ENCODE measurements at regions of chr3 and their contacts with region 1.

Region 1: GRCh38 chr3:21017115-21017852 is 733.7 kb downstream of the ZNF385D start:
- DNase-seq: peak; percentile 85
- H3K4me3 ChIP-seq: no peak overlapping the region
- H3K27ac ChIP-seq: no peak overlapping the region
- H3K4me1 ChIP-seq: no peaks in the 10 kb centered on the region
- H3K27me3 ChIP-seq: no peaks in the 10 kb centered on the region
- CTCF ChIP-seq: peak; percentile 2 to 40

Region 2: DNA sequence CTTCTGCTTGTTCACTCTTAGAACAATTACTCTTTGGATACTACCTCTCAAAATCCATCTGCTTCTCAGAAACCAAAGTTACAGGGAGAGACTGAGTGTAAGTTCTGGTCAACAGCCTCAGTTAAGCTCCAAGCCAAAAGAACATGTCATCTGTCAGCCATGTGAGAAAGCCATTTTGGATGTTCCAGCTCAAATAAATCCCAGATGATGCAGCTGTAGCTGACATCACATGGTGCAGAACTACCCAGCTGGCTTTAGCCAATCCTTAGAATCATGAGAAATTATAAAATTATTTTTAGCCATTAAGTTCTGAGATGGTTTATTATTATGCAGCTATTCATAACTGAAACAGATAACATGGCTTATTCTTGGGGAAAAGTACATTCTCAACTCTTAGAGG is 37.7 kb after region 1 on chr3:
- CTCF ChIA-PET with region 1: no interaction called
- dilution Hi-C with region 1: no loop called
- in situ Hi-C with region 1: no loop called
- intact Hi-C with region 1: no loop called
- DNase-seq: no peak
- H3K4me3 ChIP-seq: no peak overlapping the region
- H3K27ac ChIP-seq: no peak overlapping the region
- H3K4me1 ChIP-seq: no peaks in the 10 kb centered on the region
- H3K27me3 ChIP-seq: no peaks in the 10 kb centered on the region
- CTCF ChIP-seq: no peak

Region 3: DNA sequence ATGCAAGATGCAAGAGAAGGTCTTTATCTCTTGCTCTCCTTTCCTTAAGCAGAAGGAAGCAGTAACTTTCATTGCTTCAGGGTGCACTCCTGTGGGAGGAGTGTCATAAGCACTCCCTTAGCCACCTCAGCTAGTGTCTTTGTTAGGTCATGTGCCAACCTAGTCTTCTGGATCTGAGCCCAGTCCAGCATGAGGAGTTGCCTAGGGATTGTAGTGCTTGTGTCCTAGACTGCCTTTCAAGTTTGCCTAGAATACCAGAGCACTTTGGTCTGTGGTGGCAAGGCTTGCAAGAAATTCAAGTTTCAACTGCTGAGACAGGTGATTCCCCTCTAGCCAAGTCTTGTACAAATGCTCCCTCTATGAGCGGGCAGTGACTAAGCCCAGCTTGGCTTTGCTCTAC is 100.1 kb after region 1 on chr3:
- CTCF ChIA-PET with region 1: interaction called, 22 read pairs
- dilution Hi-C with region 1: no loop called
- in situ Hi-C with region 1: no loop called
- intact Hi-C with region 1: no loop called
- DNase-seq: peak; percentile 25
- H3K4me3 ChIP-seq: no peak overlapping the region
- H3K27ac ChIP-seq: no peak overlapping the region
- H3K4me1 ChIP-seq: no peaks in the 10 kb centered on the region
- H3K27me3 ChIP-seq: no peaks in the 10 kb centered on the region
- CTCF ChIP-seq: no peak

Region 4: DNA sequence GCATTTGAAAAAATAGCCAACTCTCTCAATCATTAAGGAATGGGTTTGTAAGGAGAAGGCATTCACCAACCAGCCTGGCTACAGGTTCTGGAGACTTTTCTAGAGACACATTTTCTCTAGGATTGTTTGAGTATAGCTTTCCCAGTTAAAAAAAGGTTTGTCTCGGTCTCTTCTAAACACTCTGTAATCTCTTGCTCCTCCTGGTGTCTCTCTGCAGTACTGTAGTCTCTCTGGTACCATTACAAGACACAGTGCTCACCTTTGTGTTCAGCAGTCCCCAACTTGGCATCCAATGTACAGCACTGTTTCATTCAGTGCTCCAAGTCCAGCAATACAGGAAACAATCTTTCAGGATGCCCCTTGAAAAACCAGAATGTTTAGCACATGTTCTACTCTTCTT is 199.3 kb after region 1 on chr3:
- CTCF ChIA-PET with region 1: interaction called, 11 read pairs
- dilution Hi-C with region 1: no loop called
- in situ Hi-C with region 1: no loop called
- intact Hi-C with region 1: no loop called
- DNase-seq: peak; percentile 22
- H3K4me3 ChIP-seq: no peak overlapping the region
- H3K27ac ChIP-seq: no peak overlapping the region
- H3K4me1 ChIP-seq: no peaks in the 10 kb centered on the region
- H3K27me3 ChIP-seq: no peaks in the 10 kb centered on the region
- CTCF ChIP-seq: peak in 1 of 2 donors; percentile 49

Measured in mammary epithelial cell (primary cell).